Activated naive CD4-positive, alpha-beta T cell treated with anti-CD3 and anti-CD28 coated beads for 36 hours (primary cell): ENCODE measurements at regions of chr2 and their contacts with region 1.

Region 1: GRCh38 chr2:36246320-36246990 is 109.1 kb upstream of the CRIM1 start:
- DNase-seq: no peak
- H3K4me3 Mint-ChIP-seq: peak overlapping the region; percentile 24
- H3K27ac Mint-ChIP-seq: peak overlapping the region; percentile 72
- H3K4me1 Mint-ChIP-seq: peaks cover 59% of the 10 kb centered on the region
- H3K27me3 Mint-ChIP-seq: no peaks in the 10 kb centered on the region

Region 2: DNA sequence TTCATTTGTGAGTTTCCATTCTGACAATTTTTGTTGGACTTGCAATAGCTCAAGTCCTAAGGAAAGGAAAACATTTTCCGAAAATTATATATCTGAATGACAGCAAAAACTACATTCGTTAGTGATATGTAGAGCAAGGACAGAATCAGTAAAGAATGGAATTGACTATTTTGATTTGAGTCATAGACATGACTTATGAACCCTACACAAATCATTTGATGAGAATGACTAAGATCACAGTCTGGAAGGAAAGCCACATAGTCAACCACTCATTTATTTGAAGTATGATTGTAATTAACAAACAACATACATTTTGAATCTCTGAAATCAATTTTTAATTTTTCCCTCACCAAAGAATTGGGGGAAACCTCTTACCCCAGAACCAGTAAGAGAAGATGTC is 122.5 kb before region 1 on chr2:
- CTCF ChIA-PET with region 1: no interaction called
- intact Hi-C with region 1: loop called (anchors 1 kb)
- DNase-seq: no peak
- H3K4me3 Mint-ChIP-seq: no peak overlapping the region
- H3K27ac Mint-ChIP-seq: no peak overlapping the region
- H3K4me1 Mint-ChIP-seq: peaks cover 11% of the 10 kb centered on the region
- H3K27me3 Mint-ChIP-seq: peaks cover 19% of the 10 kb centered on the region

Region 3: DNA sequence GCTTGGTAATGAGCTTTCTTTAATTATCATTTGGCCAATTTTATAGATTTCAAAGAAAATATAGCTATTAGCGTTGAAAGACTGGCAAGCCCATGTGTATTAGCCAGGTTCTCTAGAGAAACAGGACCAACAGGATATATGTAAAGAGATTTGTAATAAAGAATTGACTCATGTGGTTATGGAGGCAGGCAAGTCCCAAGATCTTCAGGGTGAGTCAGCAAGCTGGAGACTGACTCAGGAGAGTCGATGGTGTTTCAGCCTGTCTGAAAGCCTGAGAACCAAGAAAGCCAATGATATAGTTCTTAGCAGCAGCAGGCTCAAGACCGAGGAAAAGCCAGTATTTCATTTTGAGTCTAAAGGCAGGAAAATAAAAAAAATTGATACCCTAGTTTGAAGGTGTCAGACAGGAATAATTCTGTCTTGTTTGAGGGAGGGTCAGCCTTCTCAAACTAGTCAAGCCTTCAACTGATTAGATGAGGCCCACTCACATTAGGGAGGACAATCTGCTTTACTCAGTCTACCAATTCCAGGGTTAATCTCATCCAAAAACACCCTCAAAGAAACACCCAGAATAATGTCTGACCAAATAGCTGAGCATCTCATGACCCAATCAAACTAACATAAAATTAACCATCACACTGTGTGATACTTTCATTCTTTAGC is 30.8 kb after region 1 on chr2:
- CTCF ChIA-PET with region 1: no interaction called
- intact Hi-C with region 1: loop called (anchors 1 kb)
- DNase-seq: peak; percentile 59
- H3K4me3 Mint-ChIP-seq: no peak overlapping the region
- H3K27ac Mint-ChIP-seq: no peak overlapping the region
- H3K4me1 Mint-ChIP-seq: no peaks in the 10 kb centered on the region
- H3K27me3 Mint-ChIP-seq: no peaks in the 10 kb centered on the region

Region 4: DNA sequence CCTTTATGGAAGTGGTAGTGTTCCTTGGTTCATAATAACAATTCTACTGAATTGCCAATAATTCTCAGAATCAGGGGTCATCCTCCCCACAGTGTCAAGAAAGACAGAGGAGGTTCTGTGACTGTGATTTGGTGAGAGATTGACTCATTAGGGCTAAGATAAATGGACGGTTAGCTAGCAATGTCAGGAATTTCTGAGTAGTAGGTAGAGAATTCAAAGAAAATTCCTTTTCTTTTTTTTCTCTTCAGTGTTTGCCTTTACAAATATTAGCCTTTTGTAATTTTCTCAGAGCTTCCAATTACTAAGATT is 92.3 kb after region 1 on chr2:
- CTCF ChIA-PET with region 1: interaction called, 4 read pairs
- intact Hi-C with region 1: loop called (anchors 1 kb)
- DNase-seq: no peak
- H3K4me3 Mint-ChIP-seq: no peak overlapping the region
- H3K27ac Mint-ChIP-seq: no peak overlapping the region
- H3K4me1 Mint-ChIP-seq: peaks cover 5% of the 10 kb centered on the region
- H3K27me3 Mint-ChIP-seq: peaks cover 11% of the 10 kb centered on the region

Region 5: DNA sequence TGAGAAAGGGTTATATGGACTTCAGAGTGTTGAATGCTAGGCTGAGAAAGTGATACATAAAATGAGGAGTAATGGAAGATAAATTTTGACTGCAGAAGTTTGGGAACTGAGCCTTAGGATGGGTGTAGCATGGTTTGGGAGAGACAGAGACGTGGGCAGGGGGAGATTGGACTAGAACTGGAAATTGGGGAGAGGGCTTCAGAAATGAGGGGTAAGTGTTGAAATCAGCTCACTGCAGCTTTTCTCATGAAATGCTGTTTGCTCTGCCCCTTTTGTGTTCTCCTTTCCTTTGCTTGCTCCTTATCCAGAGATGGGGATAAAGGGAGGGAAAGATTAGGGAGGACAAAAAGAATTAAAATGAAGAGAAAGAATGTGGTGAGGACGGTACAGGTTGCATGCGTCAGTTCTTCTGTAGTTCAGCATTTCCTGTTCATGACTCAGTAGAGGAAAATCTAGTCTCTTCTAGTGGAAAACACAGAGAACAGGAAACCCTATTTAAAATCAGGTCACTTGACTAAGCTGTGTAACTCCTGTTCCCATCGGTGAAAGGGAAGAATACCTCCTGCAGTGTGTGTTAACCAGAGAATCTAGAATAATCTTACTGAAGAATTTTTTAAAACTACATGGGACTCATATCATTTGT is 214.7 kb after region 1 on chr2:
- CTCF ChIA-PET with region 1: no interaction called
- intact Hi-C with region 1: loop called (anchors 2 kb)
- DNase-seq: no peak
- H3K4me3 Mint-ChIP-seq: no peak overlapping the region
- H3K27ac Mint-ChIP-seq: no peak overlapping the region
- H3K4me1 Mint-ChIP-seq: no peaks in the 10 kb centered on the region
- H3K27me3 Mint-ChIP-seq: no peaks in the 10 kb centered on the region

Region 6: GRCh38 chr2:36966370-36967235 is 720.1 kb after region 1 on chr2 and contains the start of gene STRN:
- CTCF ChIA-PET with region 1: no interaction called
- intact Hi-C with region 1: loop called (anchors 5 kb)
- DNase-seq: peak; percentile 96
- H3K4me3 Mint-ChIP-seq: peak within 1 kb of the TSS; percentile 94
- H3K27ac Mint-ChIP-seq: peak within 1 kb of the TSS; percentile 90
- H3K4me1 Mint-ChIP-seq: peaks cover 33% of the 10 kb centered on the region
- H3K27me3 Mint-ChIP-seq: no peaks in the 10 kb centered on the region
- total RNA-seq, gene STRN: 19.3 to 22.2 TPM

Region 7: DNA sequence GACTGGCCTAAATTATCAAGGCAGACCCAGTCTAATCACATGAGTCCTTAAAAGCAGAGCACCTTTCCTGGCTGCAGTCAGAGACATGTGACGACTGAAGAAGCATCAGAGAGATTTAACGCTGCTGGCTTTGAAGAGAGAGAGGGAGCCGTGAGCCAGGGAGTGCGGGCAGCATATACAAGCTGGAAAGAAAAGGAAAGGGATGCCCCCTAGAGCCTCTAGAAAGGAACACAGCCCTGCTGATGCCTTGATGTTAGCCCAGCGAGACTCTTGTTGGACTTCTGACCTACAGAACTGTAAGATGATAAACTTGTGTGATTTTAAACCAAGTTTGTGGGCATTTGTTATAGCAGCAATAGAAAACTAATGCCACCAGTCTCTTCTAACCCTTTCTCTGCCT is 779.6 kb after region 1 on chr2:
- CTCF ChIA-PET with region 1: no interaction called
- intact Hi-C with region 1: no loop called
- DNase-seq: no peak
- H3K4me3 Mint-ChIP-seq: no peak overlapping the region
- H3K27ac Mint-ChIP-seq: no peak overlapping the region
- H3K4me1 Mint-ChIP-seq: no peaks in the 10 kb centered on the region
- H3K27me3 Mint-ChIP-seq: no peaks in the 10 kb centered on the region